AG04450 (cell line): ENCODE measurements at regions of chr15 and their contacts with region 1.

Region 1: DNA sequence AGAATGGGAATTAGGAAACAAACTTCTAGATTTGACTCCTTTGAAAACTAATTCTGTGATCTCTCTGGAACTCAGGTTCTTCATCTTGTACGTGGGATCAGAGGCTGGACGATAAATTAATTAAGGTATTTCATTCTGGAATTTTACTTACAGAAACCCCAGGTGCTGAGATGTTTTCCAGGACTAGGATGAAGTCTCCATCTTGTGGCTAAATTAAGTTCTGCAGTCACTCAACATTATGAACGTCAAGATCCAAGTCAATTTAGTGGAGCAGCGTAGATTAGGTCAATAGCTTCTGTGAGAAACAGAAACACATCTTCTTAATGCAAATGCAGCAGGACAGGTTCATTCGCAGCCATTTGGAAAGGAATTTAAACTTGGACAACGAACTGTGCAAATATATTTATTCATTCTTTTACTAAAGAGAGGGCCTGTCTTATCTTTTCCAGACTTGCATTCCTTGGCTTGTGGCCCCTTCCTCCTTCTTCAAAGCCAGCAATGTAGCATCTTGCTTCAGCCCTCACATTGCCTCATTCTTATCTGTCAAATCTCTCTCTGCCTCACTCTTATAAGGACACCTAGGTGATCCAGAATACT is 26.7 kb upstream of the TMC3 start:
- DNase-seq: peak; percentile 27
- H3K4me3 ChIP-seq: no peak overlapping the region
- H3K27ac ChIP-seq: no peak overlapping the region
- H3K27me3 ChIP-seq: peaks cover 2% of the 10 kb centered on the region
- CTCF ChIP-seq: peak; percentile 86

Region 2: GRCh38 chr15:81106560-81106959 is 294.2 kb before region 1 on chr15:
- CTCF ChIA-PET with region 1: interaction called, 11 read pairs
- POLR2A ChIA-PET with region 1: no interaction called
- DNase-seq: peak; percentile 63
- H3K4me3 ChIP-seq: no peak overlapping the region
- H3K27ac ChIP-seq: no peak overlapping the region
- H3K27me3 ChIP-seq: peaks cover 13% of the 10 kb centered on the region
- CTCF ChIP-seq: peak; percentile 75

Region 3: GRCh38 chr15:81284256-81285031 is 116.3 kb before region 1 on chr15:
- CTCF ChIA-PET with region 1: interaction called, 23 read pairs
- POLR2A ChIA-PET with region 1: interaction called, 4 read pairs
- DNase-seq: no peak
- H3K4me3 ChIP-seq: no peak overlapping the region
- H3K27ac ChIP-seq: no peak overlapping the region
- H3K27me3 ChIP-seq: peaks cover 3% of the 10 kb centered on the region
- CTCF ChIP-seq: no peak

Region 4: DNA sequence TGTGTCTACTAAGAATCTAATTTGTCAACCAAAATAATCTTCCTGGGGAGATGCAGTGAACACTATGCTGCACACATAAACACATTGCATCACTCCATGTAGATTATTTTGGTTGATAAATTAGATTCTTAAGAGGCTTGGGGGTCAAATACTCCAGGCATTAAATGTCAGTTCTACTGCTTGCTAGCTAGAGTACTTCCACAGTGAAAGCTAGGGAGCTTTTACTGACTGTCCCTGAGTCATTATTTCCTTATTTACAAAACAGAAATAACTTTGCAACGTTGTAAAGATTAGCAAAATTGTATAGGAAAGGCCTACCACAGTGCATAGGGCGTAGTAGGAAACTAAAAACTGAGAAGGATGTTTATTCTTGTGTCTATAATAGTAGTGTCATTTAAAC is 13.8 kb before region 1 on chr15:
- CTCF ChIA-PET with region 1: interaction called, 18 read pairs
- POLR2A ChIA-PET with region 1: no interaction called
- DNase-seq: no peak
- H3K4me3 ChIP-seq: no peak overlapping the region
- H3K27ac ChIP-seq: no peak overlapping the region
- H3K27me3 ChIP-seq: no peaks in the 10 kb centered on the region
- CTCF ChIP-seq: no peak